HEK293 (cell line): ENCODE measurements at regions of chr9 and their contacts with region 1.

Region 1: GRCh38 chr9:121439711-121440664 is 59.7 kb downstream of the GGTA1 start:
- H3K4me3 ChIP-seq: no peak overlapping the region
- H3K27ac ChIP-seq: no peak overlapping the region
- H3K4me1 ChIP-seq: no peaks in the 10 kb centered on the region
- CTCF ChIP-seq: no peak

Region 2: GRCh38 chr9:121450241-121450640 is 10.3 kb after region 1 on chr9:
- CTCF ChIA-PET with region 1: interaction called, 14 read pairs
- POLR2A ChIA-PET with region 1: no interaction called
- H3K4me3 ChIP-seq: no peak overlapping the region
- H3K27ac ChIP-seq: no peak overlapping the region
- H3K4me1 ChIP-seq: peaks cover 9% of the 10 kb centered on the region; the same call in 1 of the 2 replicates
- CTCF ChIP-seq: no peak